Naive thymus-derived CD4-positive, alpha-beta T cell (primary cell): ENCODE measurements at regions of chr6 and their contacts with region 1.

Region 1: GRCh38 chr6:125114248-125114858 is 39.2 kb upstream of the TPD52L1 start:
- DNase-seq: peak in 7 of 9 donors; percentile 12 to 52 (median 37)
- ATAC-seq: peak; percentile 47
- H3K4me3 ChIP-seq: no peak overlapping the region
- H3K4me3 Mint-ChIP-seq: no peak overlapping the region
- H3K27ac ChIP-seq: no peak overlapping the region
- H3K27ac Mint-ChIP-seq: no peak overlapping the region
- H3K4me1 ChIP-seq: no peaks in the 10 kb centered on the region
- H3K4me1 Mint-ChIP-seq: peaks cover 0 to 2% (median 0%) of the 10 kb centered on the region in 7 donors
- H3K27me3 ChIP-seq: no peaks in the 10 kb centered on the region
- H3K27me3 Mint-ChIP-seq: peaks cover 0 to 5% (median 0%) of the 10 kb centered on the region in 5 donors

Region 2: DNA sequence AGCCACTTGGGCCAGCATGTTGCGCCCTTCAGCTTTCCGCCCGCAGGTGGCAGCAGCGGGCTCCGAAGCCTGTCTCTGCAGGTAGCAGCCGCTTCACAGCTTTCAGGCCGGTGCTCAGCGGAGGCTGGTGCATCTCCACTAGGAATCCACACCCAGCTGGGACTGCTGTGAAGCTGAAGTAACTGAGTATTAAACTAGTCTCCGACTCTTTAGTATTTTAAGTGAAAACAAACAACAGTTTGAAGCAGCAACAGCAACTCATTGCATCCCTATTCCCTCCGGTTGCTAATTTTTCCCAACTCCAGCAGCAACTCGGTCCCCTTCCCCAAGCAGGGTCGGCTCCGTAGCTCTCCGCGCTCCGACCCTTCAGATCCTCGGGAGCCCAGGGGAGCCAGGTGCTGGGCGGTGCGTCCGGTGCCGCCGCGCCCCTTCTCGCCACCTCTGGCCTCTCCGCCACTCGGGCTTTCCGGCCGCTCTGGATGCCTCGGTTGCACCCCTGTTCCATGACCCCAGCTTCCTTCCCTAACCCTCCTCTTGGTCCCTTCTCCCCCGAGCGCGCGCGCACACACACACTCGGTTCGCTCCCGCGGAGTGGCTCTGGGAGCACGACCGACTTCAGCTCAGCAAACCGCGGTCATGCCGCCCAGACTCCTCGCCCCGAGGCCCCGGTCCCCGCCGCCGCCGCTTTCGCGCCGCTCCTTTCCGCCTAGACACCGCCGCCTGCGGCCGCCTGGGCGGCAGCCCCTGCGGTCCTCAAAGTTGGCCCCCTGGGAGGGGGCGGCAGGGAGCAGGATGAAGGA is 1311.5 kb before region 1 on chr6:
- CTCF ChIA-PET with region 1: interaction called, 3 read pairs
- POLR2A ChIA-PET with region 1: no interaction called
- intact Hi-C with region 1: loop called in 1 of 2 experiments (anchors 1 kb)
- DNase-seq: peak in 7 of 9 donors; percentile 24 to 71 (median 30)
- ATAC-seq: peak; percentile 75
- H3K4me3 ChIP-seq: no peak overlapping the region
- H3K4me3 Mint-ChIP-seq: peak overlapping the region in 9 of 10 donors; percentile 29 to 78 (median 60)
- H3K27ac ChIP-seq: no peak overlapping the region
- H3K27ac Mint-ChIP-seq: no peak overlapping the region
- H3K4me1 ChIP-seq: no peaks in the 10 kb centered on the region
- H3K4me1 Mint-ChIP-seq: peaks cover 4 to 14% (median 8%) of the 10 kb centered on the region in 7 donors
- H3K27me3 ChIP-seq: no peaks in the 10 kb centered on the region
- H3K27me3 Mint-ChIP-seq: peaks cover 44 to 59% (median 50%) of the 10 kb centered on the region in 5 donors

Region 3: GRCh38 chr6:124870611-124871459 is 243.5 kb before region 1 on chr6:
- CTCF ChIA-PET with region 1: interaction called, 39 read pairs
- POLR2A ChIA-PET with region 1: no interaction called
- intact Hi-C with region 1: loop called (anchors 1 kb)
- DNase-seq: peak in 2 of 9 donors; percentile 9 to 26
- ATAC-seq: no peak
- H3K4me3 ChIP-seq: no peak overlapping the region
- H3K4me3 Mint-ChIP-seq: no peak overlapping the region
- H3K27ac ChIP-seq: no peak overlapping the region
- H3K27ac Mint-ChIP-seq: no peak overlapping the region
- H3K4me1 ChIP-seq: no peaks in the 10 kb centered on the region
- H3K4me1 Mint-ChIP-seq: no peaks in the 10 kb centered on the region
- H3K27me3 ChIP-seq: no peaks in the 10 kb centered on the region
- H3K27me3 Mint-ChIP-seq: peaks cover 0 to 12% (median 10%) of the 10 kb centered on the region in 5 donors

Region 4: GRCh38 chr6:124961777-124962611 is 152.4 kb before region 1 on chr6 and contains the start of gene RNF217:
- CTCF ChIA-PET with region 1: no interaction called
- POLR2A ChIA-PET with region 1: no interaction called
- intact Hi-C with region 1: loop called in 1 of 2 experiments (anchors 5 kb)
- DNase-seq: peak in 5 of 9 donors; percentile 8 to 48 (median 16)
- ATAC-seq: peak; percentile 63
- H3K4me3 ChIP-seq: no peak within 1 kb of the TSS
- H3K4me3 Mint-ChIP-seq: peak within 1 kb of the TSS; percentile 72 to 89 (median 81)
- H3K27ac ChIP-seq: no peak within 1 kb of the TSS
- H3K27ac Mint-ChIP-seq: peak within 1 kb of the TSS in 3 of 9 donors; percentile 16 to 60 (median 45)
- H3K4me1 ChIP-seq: no peaks in the 10 kb centered on the region
- H3K4me1 Mint-ChIP-seq: peaks cover 15 to 31% (median 25%) of the 10 kb centered on the region in 7 donors
- H3K27me3 ChIP-seq: no peaks in the 10 kb centered on the region
- H3K27me3 Mint-ChIP-seq: peaks cover 54 to 79% (median 61%) of the 10 kb centered on the region in 5 donors
- total RNA-seq, gene RNF217: 0.89 to 3.6 (median 1.9) TPM

Region 5: GRCh38 chr6:124970243-124970642 is 144.1 kb before region 1 on chr6:
- CTCF ChIA-PET with region 1: no interaction called
- POLR2A ChIA-PET with region 1: no interaction called
- intact Hi-C with region 1: loop called in 1 of 2 experiments (anchors 5 kb)
- DNase-seq: no peak
- ATAC-seq: no peak
- H3K4me3 ChIP-seq: no peak overlapping the region
- H3K4me3 Mint-ChIP-seq: no peak overlapping the region
- H3K27ac ChIP-seq: no peak overlapping the region
- H3K27ac Mint-ChIP-seq: no peak overlapping the region
- H3K4me1 ChIP-seq: no peaks in the 10 kb centered on the region
- H3K4me1 Mint-ChIP-seq: peaks cover 0 to 12% (median 4%) of the 10 kb centered on the region in 7 donors
- H3K27me3 ChIP-seq: no peaks in the 10 kb centered on the region
- H3K27me3 Mint-ChIP-seq: peaks cover 12 to 22% (median 15%) of the 10 kb centered on the region in 5 donors

Region 6: DNA sequence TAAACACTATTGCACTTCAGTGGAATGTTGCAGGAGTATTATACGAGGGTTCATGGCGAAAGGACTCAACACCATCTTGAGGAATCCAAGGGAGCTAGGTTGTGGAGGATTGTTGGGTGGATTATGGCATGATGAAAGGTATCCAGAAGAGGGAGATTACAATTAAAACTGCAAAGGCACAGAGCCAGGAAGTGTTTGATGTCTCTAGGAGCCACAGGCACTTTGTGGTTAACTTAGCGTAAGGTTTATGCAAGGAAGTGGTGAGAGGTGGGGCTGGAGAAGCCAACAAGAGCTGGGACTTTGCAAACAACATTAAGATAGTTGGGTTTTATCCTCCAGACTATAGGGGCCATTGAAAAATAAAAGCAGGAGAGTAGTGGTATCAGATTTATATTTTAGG is 47.4 kb before region 1 on chr6:
- CTCF ChIA-PET with region 1: interaction called, 13 read pairs
- POLR2A ChIA-PET with region 1: no interaction called
- intact Hi-C with region 1: loop called in 1 of 2 experiments (anchors 1 kb)
- DNase-seq: peak in 8 of 9 donors; percentile 13 to 77 (median 58)
- ATAC-seq: peak; percentile 89
- H3K4me3 ChIP-seq: no peak overlapping the region
- H3K4me3 Mint-ChIP-seq: no peak overlapping the region
- H3K27ac ChIP-seq: no peak overlapping the region
- H3K27ac Mint-ChIP-seq: no peak overlapping the region
- H3K4me1 ChIP-seq: peaks cover 0 to 36% of the 10 kb centered on the region in 2 donors
- H3K4me1 Mint-ChIP-seq: peaks cover 0 to 6% (median 0%) of the 10 kb centered on the region in 7 donors
- H3K27me3 ChIP-seq: no peaks in the 10 kb centered on the region
- H3K27me3 Mint-ChIP-seq: peaks cover 0 to 10% (median 0%) of the 10 kb centered on the region in 5 donors

Region 7: GRCh38 chr6:125129354-125129753 is 15.0 kb after region 1 on chr6:
- CTCF ChIA-PET with region 1: no interaction called
- POLR2A ChIA-PET with region 1: no interaction called
- intact Hi-C with region 1: no loop called
- DNase-seq: no peak
- ATAC-seq: no peak
- H3K4me3 ChIP-seq: no peak overlapping the region
- H3K4me3 Mint-ChIP-seq: no peak overlapping the region
- H3K27ac ChIP-seq: no peak overlapping the region
- H3K27ac Mint-ChIP-seq: no peak overlapping the region
- H3K4me1 ChIP-seq: no peaks in the 10 kb centered on the region
- H3K4me1 Mint-ChIP-seq: no peaks in the 10 kb centered on the region
- H3K27me3 ChIP-seq: no peaks in the 10 kb centered on the region
- H3K27me3 Mint-ChIP-seq: peaks cover 0 to 20% (median 10%) of the 10 kb centered on the region in 5 donors

Region 8: DNA sequence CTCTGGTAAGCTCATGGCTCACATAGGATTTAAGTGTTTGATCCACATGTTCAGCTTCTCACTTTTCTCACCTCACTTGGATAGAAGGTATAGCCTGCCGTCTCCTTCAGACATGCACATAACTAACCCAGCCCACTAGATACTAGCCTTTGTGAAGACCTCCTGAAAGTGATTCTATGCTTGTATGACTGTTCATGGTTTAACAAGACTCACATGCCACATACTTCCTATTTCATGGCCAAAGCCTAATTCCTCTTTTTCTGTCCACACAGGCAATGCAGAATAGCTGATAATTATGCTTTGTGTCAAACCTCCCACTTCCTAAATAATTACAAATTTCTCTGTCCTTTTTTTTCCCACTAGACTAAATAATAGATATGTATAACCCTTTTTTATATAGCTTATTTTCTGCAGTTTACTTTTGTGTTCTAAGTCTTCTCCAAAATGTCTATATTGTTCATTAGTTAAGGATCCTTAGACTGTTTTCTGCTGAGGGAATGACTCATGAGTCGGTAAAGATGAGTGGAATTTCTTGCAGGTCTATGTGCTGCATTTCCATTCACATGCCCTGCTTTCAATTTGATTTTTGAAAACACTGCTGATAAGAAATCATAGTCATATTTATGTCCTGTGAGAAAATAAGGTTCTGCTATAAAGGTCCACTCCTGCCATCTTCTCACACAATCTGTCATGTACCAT is 144.4 kb after region 1 on chr6:
- CTCF ChIA-PET with region 1: no interaction called
- POLR2A ChIA-PET with region 1: no interaction called
- intact Hi-C with region 1: no loop called
- DNase-seq: no peak
- ATAC-seq: peak; percentile 67
- H3K4me3 ChIP-seq: no peak overlapping the region
- H3K4me3 Mint-ChIP-seq: no peak overlapping the region
- H3K27ac ChIP-seq: no peak overlapping the region
- H3K27ac Mint-ChIP-seq: no peak overlapping the region
- H3K4me1 ChIP-seq: no peaks in the 10 kb centered on the region
- H3K4me1 Mint-ChIP-seq: no peaks in the 10 kb centered on the region
- H3K27me3 ChIP-seq: no peaks in the 10 kb centered on the region
- H3K27me3 Mint-ChIP-seq: no peaks in the 10 kb centered on the region